ENCODE measurements at regions of chr9 and their contacts with region 1.

Region 1: GRCh38 chr9:98848450-98849149 is 41.1 kb downstream of the GALNT12 start:
- DNase-seq: peak; percentile 95
- H3K4me3 ChIP-seq: peak overlapping the region in 1 of 2 donors; percentile 16
- H3K27ac ChIP-seq: peak overlapping the region in 1 of 2 donors; percentile 22
- H3K4me1 ChIP-seq: no peaks in the 10 kb centered on the region
- H3K27me3 ChIP-seq: no peaks in the 10 kb centered on the region
- CTCF ChIP-seq: peak; percentile 82 to 94 (median 90)
- POLR2A ChIP-seq: no peak

Region 2: DNA sequence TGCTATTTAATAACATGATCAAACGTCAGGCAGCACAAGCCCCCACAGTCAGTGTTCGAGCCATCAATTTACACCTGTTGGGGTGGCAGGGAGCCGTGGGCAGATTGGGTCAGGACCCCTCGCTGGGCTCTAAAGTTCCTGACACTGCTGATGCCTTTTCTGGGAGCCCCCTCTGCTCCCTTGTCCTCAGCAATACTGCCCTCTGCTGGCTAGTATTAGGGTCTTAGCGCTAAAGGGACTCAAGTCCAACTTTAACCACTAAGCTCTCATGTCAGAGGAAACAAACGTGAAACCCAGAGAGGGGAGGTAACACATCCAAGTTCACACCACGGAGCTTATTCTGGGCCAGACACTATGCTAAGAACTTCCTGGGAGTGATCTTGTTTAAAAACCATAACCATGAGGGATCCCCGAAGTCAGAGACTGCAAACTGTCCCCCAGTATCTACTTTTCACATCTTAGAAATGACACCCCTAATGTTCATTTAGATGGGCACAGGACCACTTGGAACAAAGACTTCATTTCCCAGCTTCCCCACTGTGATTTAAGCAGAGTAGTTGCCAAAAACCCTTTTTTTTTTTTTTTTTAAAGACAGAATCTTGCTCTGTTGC is 72.7 kb before region 1 on chr9:
- intact Hi-C with region 1: no loop called
- DNase-seq: no peak
- H3K4me3 ChIP-seq: no peak overlapping the region
- H3K27ac ChIP-seq: no peak overlapping the region
- H3K4me1 ChIP-seq: no peaks in the 10 kb centered on the region
- H3K27me3 ChIP-seq: no peaks in the 10 kb centered on the region
- CTCF ChIP-seq: peak; percentile 37 to 61 (median 40)
- POLR2A ChIP-seq: no peak

Region 3: DNA sequence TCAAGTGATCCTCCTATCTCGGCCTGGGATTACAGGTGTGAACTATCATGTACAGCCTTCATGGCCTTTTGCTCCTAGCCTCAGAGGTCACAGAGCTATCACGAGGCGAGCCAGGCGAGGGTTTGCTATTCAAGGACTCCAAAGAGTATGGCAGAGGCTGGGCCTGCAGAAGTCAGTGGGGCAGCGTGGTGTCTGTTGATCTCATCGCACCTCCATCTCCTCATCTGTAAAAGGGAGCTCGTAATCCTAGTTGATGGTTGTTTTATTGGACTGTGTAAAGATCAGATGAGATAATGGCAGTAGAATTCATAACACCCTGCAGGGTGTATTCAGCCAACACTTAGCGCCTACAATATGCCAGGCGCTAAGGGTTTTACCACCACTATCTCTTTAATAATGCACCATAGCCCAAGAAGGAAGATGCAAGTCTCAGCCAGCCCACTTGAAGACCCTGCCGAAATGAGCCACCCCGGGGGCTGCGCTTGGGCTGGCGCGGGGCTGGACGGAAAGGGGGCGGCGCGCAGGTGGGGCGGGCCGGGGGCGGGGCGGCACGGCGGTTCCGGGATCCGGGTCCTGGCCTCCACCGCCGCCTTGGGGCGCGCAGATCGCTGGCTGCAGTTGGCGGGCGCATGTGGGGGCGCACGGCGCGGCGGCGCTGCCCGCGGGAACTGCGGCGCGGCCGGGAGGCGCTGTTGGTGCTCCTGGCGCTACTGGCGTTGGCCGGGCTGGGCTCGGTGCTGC is 41.4 kb before region 1 on chr9 and contains the start of gene GALNT12:
- intact Hi-C with region 1: loop called (anchors 5 kb)
- DNase-seq: no peak
- H3K4me3 ChIP-seq: peak within 1 kb of the TSS; percentile 39 to 41
- H3K27ac ChIP-seq: no peak within 1 kb of the TSS
- H3K4me1 ChIP-seq: peaks cover 7% of the 10 kb centered on the region
- H3K27me3 ChIP-seq: no peaks in the 10 kb centered on the region
- CTCF ChIP-seq: no peak
- POLR2A ChIP-seq: no peak
- total RNA-seq, gene GALNT12: 9.0 to 10.2 TPM

Region 4: DNA sequence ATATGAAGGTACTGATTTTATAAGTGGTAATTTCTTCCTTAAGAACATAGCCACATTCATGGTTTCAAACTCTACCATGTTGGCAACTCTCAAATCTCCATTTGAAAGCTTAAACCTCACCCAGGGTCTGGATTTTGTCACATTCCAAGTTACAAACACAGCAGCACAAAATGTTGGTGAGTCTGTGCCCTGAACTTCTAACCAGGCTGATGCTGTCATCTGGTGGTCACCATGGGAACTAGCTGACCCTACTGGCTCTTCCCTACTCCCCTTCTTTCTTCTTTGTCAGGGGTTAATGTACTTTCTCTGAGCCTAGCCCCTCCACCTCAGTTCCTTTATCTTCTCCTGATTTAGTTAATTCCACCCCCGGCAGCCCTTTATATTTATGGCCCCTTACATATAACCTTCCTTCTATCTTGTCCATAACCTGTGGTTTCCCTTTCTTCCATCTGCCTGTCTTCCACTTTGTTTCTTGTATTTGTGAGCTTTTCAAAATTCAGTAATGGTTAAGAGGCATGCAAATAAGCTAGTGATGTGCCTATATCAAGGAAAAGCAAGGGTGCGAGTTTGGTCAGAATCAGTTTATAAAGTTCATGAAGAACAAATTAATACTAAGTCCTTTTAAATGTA is 292.2 kb after region 1 on chr9:
- intact Hi-C with region 1: loop called (anchors 2 kb)
- DNase-seq: peak; percentile 36
- H3K4me3 ChIP-seq: no peak overlapping the region
- H3K27ac ChIP-seq: no peak overlapping the region
- H3K4me1 ChIP-seq: no peaks in the 10 kb centered on the region
- H3K27me3 ChIP-seq: no peaks in the 10 kb centered on the region
- CTCF ChIP-seq: peak; percentile 61 to 83 (median 72)
- POLR2A ChIP-seq: no peak